ENCODE measurements at regions of chr16 and their contacts with region 1.

Region 1: DNA sequence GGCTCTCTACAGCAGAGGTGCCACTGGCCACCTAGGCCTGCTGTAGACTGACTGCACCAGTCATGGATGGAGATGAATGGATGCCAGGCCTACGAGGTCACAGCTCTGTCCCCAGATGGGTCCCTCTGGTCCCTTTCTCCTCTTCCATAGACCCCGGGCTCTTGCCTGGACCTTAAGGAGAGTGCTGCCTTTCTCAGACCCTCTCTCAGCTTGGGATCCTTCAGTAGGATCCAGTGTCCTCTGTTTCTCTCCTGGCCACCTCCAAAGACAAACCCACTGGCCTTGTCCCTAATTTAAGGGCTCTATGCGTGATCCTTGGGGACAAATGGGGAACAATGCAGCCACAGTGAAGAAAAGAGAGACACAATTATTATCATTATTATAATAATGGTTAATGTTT is 189.3 kb upstream of the C16orf82 start:
- DNase-seq: no peak
- H3K4me3 ChIP-seq: no peak overlapping the region
- H3K27ac ChIP-seq: no peak overlapping the region
- H3K4me1 ChIP-seq: no peaks in the 10 kb centered on the region
- H3K27me3 ChIP-seq: no peaks in the 10 kb centered on the region
- CTCF ChIP-seq: no peak
- EP300 ChIP-seq: no peak
- POLR2A ChIP-seq: no peak

Region 2: DNA sequence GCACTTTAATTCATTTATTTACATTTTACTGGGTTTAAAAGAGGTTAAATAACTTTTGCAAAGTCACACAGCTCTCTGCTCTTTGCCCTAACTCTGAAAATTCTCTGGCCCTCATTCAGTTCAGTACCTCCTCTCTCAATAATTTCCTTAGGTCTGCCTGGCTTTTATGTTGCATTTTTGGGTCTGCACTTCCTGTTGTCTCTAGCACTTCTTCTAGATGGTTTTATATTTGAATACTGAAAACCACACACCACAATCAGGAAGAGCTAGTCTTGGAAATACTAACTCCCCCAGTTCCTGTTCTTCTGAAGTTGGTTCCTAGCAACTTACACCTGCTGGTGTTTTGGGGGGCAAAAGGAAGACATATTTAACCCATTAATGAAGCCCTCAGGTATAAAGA is 607.7 kb before region 1 on chr16:
- intact Hi-C with region 1: loop called in 1 of 4 experiments (anchors 10 kb)
- DNase-seq: no peak
- H3K4me3 ChIP-seq: no peak overlapping the region
- H3K27ac ChIP-seq: no peak overlapping the region
- H3K4me1 ChIP-seq: no peaks in the 10 kb centered on the region
- H3K27me3 ChIP-seq: no peaks in the 10 kb centered on the region
- CTCF ChIP-seq: no peak
- EP300 ChIP-seq: no peak
- POLR2A ChIP-seq: no peak

Region 3: GRCh38 chr16:26762594-26762993 is 114.8 kb before region 1 on chr16:
- intact Hi-C with region 1: no loop called
- DNase-seq: no peak
- H3K4me3 ChIP-seq: no peak overlapping the region
- H3K27ac ChIP-seq: no peak overlapping the region
- H3K4me1 ChIP-seq: no peaks in the 10 kb centered on the region
- H3K27me3 ChIP-seq: no peaks in the 10 kb centered on the region
- CTCF ChIP-seq: no peak
- EP300 ChIP-seq: no peak
- POLR2A ChIP-seq: no peak

Region 4: DNA sequence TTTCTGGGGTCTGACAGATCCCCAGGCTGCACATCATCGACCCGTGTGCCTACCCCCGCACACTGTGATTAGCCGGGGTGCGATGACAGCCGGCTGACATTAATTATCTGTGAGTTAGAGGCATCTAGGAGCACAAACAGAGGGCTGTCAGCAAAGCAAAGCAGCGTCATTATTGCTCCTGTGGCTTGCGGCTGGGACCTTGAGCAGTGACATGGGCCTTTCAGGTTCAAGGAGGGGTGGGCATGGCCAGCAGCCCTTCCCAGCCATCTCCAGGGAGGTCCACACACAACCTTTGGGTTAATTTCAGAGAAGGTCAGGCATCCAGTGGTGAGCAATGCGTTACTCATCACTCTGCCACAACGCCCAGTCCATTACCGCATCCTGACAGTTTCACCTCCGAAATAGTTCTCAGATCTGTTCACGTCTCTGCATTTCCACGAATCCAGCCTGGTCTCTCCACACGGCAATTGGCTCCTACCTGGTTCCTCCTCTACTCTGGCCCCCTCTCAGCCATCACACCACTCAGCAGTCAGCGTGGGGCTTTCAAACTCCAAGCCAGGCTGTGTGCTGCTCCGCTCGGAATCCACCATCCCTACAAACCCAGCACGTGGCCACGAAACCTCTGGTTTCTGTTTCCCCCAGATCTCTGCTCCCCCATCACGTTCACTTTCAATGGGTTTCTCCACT is 60.4 kb before region 1 on chr16:
- intact Hi-C with region 1: no loop called
- DNase-seq: no peak
- H3K4me3 ChIP-seq: no peak overlapping the region
- H3K27ac ChIP-seq: no peak overlapping the region
- H3K4me1 ChIP-seq: no peaks in the 10 kb centered on the region
- H3K27me3 ChIP-seq: no peaks in the 10 kb centered on the region
- CTCF ChIP-seq: no peak
- EP300 ChIP-seq: no peak
- POLR2A ChIP-seq: no peak